ENCODE measurements at regions of chr7 and their contacts with region 1.

Region 1: DNA sequence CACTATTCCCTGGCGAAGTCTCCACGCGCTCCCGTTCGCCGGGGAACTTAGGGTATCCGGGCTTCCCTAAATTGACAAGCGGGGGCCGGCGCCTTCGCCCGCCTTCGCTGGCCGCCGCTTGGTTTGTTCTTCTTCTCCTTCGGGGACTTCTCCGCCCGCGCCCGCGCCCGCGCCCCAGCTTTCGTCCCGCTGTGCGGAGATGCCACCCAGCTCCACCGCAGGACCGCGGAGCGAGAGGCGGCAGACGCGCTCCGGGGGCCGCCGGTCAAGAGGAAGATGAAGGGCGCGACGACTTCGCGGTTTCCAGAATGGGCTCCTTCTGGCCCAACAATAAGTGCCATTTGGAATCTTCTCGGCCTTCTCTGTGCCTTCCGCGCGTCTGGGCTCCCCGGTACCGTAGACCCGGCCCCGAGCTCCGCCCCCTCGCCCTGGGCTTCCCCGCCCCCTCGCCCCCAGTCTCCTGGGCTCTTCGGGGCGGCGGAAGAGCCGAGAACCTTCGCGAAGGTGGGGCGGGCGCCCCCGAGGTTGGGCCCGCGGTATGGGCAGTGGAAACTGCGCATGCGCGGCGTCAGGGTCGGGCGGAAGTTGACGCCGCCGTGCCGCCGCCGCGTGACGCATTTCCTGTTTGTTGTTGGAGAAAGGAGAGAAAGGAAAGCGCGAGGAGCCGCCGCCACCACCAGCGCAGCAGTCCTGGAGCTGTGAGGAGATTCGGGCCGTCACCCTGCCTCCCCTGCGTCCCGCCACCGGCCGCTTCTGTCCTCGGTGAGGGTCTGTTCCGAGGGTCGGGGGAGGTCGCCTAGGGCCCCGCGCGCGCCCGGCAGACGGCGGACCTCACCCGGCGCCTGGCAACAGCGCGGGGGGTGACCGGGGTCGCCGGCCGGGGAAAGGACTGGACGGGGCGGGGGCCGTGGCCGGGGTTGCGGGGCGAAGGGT is at the start of gene DNAJB6:
- DNase-seq: peak; percentile 83 to 95
- H3K4me3 ChIP-seq: peak within 1 kb of the TSS; percentile 90
- H3K27ac ChIP-seq: peak within 1 kb of the TSS; percentile 66
- H3K4me1 ChIP-seq: peaks cover 36% of the 10 kb centered on the region
- H3K27me3 ChIP-seq: no peaks in the 10 kb centered on the region
- CTCF ChIP-seq: no peak
- total RNA-seq, gene DNAJB6: 137 and 182 TPM in 2 replicates

Region 2: GRCh38 chr7:157273208-157274093 is 63.2 kb before region 1 on chr7:
- CTCF ChIA-PET with region 1: interaction called, 11 read pairs
- POLR2A ChIA-PET with region 1: no interaction called
- intact Hi-C with region 1: loop called (anchors 1 kb)
- DNase-seq: peak; percentile 59 to 71
- H3K4me3 ChIP-seq: no peak overlapping the region
- H3K27ac ChIP-seq: no peak overlapping the region
- H3K4me1 ChIP-seq: no peaks in the 10 kb centered on the region
- H3K27me3 ChIP-seq: no peaks in the 10 kb centered on the region
- CTCF ChIP-seq: peak; percentile 97

Region 3: DNA sequence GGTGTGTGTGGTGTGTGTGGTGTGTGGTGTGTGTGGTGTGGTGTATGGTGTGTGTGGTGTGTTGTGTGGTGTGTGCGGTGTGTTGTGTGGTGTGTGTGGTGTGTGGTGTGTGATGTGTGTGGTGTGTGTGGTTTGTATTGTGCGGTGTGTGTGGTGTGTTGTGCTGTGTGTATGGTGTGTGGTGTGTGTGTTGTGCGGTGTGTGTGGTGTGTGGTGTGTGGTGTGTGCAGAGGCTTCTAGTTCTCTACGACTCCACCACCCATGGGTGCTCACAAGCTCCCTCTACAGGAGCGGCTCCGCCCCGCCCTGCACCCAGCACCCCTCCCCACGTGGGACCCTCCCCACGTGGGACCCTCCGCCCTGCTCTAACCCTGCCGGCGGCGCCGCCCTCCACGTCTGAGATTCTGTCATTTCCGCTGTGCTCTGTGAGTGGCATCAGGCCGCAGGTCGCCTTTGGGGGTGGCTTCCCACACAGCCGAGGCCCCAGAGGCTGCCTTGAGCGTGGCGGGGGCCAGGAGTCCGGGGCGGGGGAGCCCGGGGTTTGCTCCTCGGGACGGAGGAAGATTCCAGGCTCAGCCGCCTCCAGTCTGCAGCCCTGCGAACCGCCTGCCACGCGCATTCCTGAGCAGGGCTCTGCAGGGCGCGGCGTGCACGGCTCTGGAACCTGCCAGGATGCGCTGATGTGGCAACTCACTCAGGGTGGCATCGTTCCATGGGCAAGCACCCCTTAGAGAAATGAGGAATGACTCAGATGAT is 36.9 kb before region 1 on chr7:
- CTCF ChIA-PET with region 1: no interaction called
- POLR2A ChIA-PET with region 1: no interaction called
- intact Hi-C with region 1: loop called (anchors 5 kb)
- DNase-seq: peak; percentile 66 to 72
- H3K4me3 ChIP-seq: no peak overlapping the region
- H3K27ac ChIP-seq: no peak overlapping the region
- H3K4me1 ChIP-seq: peaks cover 34% of the 10 kb centered on the region
- H3K27me3 ChIP-seq: no peaks in the 10 kb centered on the region
- CTCF ChIP-seq: no peak

Region 4: DNA sequence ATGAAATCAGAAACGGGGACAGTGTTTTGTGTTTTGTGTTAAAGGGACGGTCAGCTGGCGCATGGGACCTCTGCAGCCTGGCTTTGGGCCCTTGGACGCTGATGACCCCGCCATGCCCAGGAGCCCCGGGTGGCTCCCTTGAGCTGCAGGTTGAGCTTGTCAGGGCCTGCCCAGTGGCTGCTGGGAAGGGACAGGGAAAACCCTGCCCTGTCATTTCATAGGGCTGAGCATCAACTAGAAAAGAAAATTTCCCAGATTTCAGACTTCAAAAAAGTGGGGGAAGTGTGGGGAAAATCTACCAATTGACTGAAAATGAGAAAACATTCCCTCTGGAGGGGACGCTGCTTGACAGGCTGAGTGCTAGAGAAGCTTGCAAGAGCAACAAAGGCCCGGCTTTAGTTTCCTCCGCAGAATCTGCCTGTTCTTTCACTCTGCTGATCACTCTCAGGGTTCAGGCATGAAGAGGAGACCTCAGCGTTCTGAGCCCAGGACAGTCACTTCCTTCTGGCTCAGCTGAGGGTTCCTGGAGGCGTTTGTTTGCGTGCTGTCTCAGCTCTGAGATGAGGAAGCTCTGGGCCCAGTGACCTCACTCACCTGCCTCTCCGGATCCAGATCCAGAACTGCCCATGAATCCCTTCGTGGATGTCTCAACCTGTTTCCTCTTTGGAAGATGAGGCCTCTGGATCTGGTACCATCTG is 18.5 kb before region 1 on chr7:
- CTCF ChIA-PET with region 1: interaction called, 10 read pairs
- POLR2A ChIA-PET with region 1: interaction called, 3 read pairs
- intact Hi-C with region 1: no loop called
- DNase-seq: no peak
- H3K4me3 ChIP-seq: no peak overlapping the region
- H3K27ac ChIP-seq: no peak overlapping the region
- H3K4me1 ChIP-seq: no peaks in the 10 kb centered on the region
- H3K27me3 ChIP-seq: no peaks in the 10 kb centered on the region
- CTCF ChIP-seq: no peak

Region 5: DNA sequence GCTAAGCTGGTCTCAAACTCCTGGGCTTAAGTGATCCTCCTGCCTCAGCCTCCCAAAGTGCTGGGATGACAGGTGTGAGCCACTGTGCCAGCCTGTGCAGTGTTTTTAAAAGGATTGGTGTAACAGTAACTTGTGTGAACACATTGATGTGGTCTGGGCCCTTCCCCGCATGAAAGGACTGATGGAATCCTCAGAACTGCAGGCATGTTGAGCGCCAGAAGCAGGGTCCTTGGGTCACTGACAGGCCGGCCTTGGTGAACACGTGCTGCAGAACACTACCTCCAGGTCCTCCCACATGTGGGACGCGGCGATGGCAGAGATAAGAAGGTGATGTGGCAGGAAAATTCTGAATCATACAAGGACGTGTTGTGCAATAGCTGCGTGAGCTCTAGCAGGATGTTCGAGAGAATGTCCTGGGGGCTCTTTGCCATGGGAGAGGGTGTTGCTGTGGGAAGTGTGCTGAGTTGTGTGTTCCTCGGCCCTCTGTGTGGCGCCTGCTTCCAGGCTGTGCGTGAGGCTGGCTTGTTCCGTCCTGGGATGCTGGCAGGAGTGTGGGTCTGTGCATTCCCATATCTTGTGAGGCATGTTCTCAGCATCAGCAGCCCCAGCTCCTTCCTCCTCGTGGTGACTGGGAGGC is 68.3 kb after region 1 on chr7:
- CTCF ChIA-PET with region 1: interaction called, 8 read pairs
- POLR2A ChIA-PET with region 1: interaction called, 17 read pairs
- intact Hi-C with region 1: no loop called
- DNase-seq: peak; percentile 82 to 98
- H3K4me3 ChIP-seq: no peak overlapping the region
- H3K27ac ChIP-seq: peak overlapping the region; percentile 37
- H3K4me1 ChIP-seq: peaks cover 10% of the 10 kb centered on the region
- H3K27me3 ChIP-seq: no peaks in the 10 kb centered on the region
- CTCF ChIP-seq: no peak

Measured in PC-9 (cell line).